Activated T-helper 2 cell treated with anti-CD3 and anti-CD28 coated beads, Interferon-gamma antibody, Interleukin-2, Interleukin-4, amounts not matched to agents 10 μg/mL and 5 μg/mL and 100 μg/mL, durations not matched to agents 14 hours and 24 hours and 36 hours (primary cell): ENCODE measurements at regions of chr4 and their contacts with region 1.

Region 1: GRCh38 chr4:107824353-107825071 is at the start of gene SGMS2:
- DNase-seq: peak; percentile 25
- H3K4me3 Mint-ChIP-seq: peak within 1 kb of the TSS; percentile 84
- H3K27ac Mint-ChIP-seq: peak within 1 kb of the TSS; percentile 67
- H3K4me1 Mint-ChIP-seq: peaks cover 7% of the 10 kb centered on the region
- H3K27me3 Mint-ChIP-seq: peaks cover 63% of the 10 kb centered on the region
- total RNA-seq, gene SGMS2: 0.50 and 1.0 TPM in 2 replicates

Region 2: GRCh38 chr4:107719922-107720722 is 104.4 kb before region 1 on chr4 and contains the start of gene PAPSS1:
- intact Hi-C with region 1: loop called (anchors 1 kb)
- DNase-seq: peak; percentile 92
- H3K4me3 Mint-ChIP-seq: peak within 1 kb of the TSS; percentile 91
- H3K27ac Mint-ChIP-seq: peak within 1 kb of the TSS; percentile 87
- H3K4me1 Mint-ChIP-seq: peaks cover 27% of the 10 kb centered on the region
- H3K27me3 Mint-ChIP-seq: no peaks in the 10 kb centered on the region
- total RNA-seq, gene PAPSS1: 36.9 TPM in 2 replicates

Region 3: DNA sequence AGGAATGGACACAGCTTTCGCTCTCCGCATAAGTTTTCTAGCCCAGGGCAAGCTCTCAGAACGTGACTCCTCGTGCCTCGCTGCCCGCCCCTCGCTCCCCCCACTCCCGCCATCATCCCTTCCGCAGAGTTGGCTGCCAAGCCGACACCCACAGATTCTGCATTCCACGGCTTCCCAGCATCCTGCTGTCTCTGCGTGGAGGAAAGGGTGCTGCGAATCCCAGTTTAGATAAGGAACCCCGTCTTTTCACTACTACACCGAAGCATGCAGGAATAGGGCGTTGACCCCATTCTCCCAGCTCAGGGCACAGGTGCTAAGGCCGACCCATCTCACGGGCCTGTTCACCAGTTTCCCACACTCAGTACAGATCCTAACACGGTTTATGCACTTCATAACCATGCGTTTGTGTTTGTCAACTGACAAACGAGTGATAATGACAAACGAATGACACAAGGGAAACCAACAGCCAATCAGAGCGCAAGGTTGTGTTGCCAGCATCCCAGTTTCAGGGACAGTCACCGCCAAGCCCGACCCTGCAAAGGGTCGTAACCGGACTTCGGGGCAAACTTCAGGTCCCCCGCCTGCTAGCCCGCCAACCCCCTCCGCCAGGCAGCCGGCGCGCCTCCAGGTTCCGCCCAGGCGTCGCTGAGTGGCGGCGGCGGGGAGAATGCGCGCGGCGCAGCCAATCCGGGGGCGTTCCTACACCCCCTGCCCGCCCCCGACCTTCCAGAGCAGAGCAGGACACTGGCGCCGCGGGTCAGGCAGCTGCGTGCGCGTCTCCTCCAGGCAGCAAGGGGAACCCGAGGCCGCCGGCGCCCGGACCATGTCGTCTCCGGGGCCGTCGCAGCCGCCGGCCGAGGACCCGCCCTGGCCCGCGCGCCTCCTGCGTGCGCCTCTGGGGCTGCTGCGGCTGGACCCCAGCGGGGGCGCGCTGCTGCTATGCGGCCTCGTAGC is 106.6 kb after region 1 on chr4 and contains the start of gene CYP2U1:
- intact Hi-C with region 1: loop called (anchors 10 kb)
- DNase-seq: peak; percentile 77
- H3K4me3 Mint-ChIP-seq: peak within 1 kb of the TSS; percentile 82
- H3K27ac Mint-ChIP-seq: peak within 1 kb of the TSS; percentile 67
- H3K4me1 Mint-ChIP-seq: peaks cover 19% of the 10 kb centered on the region
- H3K27me3 Mint-ChIP-seq: peaks cover 36% of the 10 kb centered on the region
- total RNA-seq, gene CYP2U1: 0.80 and 1.5 TPM in 2 replicates